Body of pancreas (tissue), 4 donors: ENCODE measurements at regions of chr16 and their contacts with region 1.

Region 1: DNA sequence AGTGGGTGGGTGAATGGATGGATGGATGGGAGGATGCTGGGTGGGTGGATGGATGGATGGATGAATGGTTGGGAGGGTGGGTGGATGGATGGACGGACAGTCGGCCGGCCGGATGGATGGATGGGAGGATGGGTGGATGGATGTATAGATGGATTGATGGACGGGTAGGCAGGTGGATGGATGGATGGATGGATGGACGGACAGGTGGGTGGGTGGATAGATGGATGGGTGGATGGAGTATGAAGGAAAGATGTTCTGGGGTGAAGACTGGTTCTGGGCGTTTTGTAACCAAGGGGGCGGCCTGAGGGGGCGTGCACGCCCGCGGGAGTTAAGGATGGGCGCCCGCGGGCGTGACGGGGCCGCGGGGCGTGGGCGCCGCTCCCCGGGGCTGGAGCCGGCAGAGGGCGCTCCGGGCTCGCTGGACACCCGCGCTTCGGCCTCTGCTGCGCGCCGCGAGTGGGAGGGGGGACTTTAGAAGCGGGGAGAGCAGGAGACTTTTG is at the start of gene NECAB2:
- DNase-seq: peak in 3 of 4 donors; percentile 32 to 59 (median 38)
- ATAC-seq: peak; percentile 43
- H3K4me3 ChIP-seq: no peak within 1 kb of the TSS
- H3K27ac ChIP-seq: no peak within 1 kb of the TSS
- H3K4me1 ChIP-seq: peaks cover 4% of the 10 kb centered on the region
- H3K27me3 ChIP-seq: peaks cover 0 to 5% of the 10 kb centered on the region in 2 donors
- CTCF ChIP-seq: peak in 6 of 7 experiments; percentile 26 to 68 (median 56)
- POLR2A ChIP-seq: no peak
- total RNA-seq, gene NECAB2: 1.0 to 3.6 TPM

Region 2: GRCh38 chr16:84044118-84044488 is 76.2 kb after region 1 on chr16:
- intact Hi-C with region 1: loop called (anchors 10 kb)
- DNase-seq: peak in 1 of 4 donors; percentile 39
- ATAC-seq: no peak
- H3K4me3 ChIP-seq: no peak overlapping the region
- H3K27ac ChIP-seq: no peak overlapping the region
- H3K4me1 ChIP-seq: peaks cover 16% of the 10 kb centered on the region
- H3K27me3 ChIP-seq: no peaks in the 10 kb centered on the region
- CTCF ChIP-seq: peak in 4 of 7 experiments; percentile 24 to 28 (median 26)
- POLR2A ChIP-seq: no peak

Region 3: GRCh38 chr16:84062734-84063640 is 95.1 kb after region 1 on chr16:
- intact Hi-C with region 1: loop called (anchors 5 kb)
- DNase-seq: peak; percentile 76 to 82 (median 78)
- ATAC-seq: peak; percentile 87
- H3K4me3 ChIP-seq: no peak overlapping the region
- H3K27ac ChIP-seq: no peak overlapping the region
- H3K4me1 ChIP-seq: no peaks in the 10 kb centered on the region
- H3K27me3 ChIP-seq: no peaks in the 10 kb centered on the region
- CTCF ChIP-seq: peak; percentile 71 to 90 (median 80)
- POLR2A ChIP-seq: no peak

Region 4: GRCh38 chr16:84194470-84195200 is 226.8 kb after region 1 on chr16:
- intact Hi-C with region 1: loop called (anchors 10 kb)
- DNase-seq: no peak
- ATAC-seq: no peak
- H3K4me3 ChIP-seq: no peak overlapping the region
- H3K27ac ChIP-seq: no peak overlapping the region
- H3K4me1 ChIP-seq: no peaks in the 10 kb centered on the region
- H3K27me3 ChIP-seq: no peaks in the 10 kb centered on the region
- CTCF ChIP-seq: no peak
- POLR2A ChIP-seq: no peak